Naive thymus-derived CD4-positive, alpha-beta T cell (primary cell): ENCODE measurements at regions of chr12 and their contacts with region 1.

Region 1: DNA sequence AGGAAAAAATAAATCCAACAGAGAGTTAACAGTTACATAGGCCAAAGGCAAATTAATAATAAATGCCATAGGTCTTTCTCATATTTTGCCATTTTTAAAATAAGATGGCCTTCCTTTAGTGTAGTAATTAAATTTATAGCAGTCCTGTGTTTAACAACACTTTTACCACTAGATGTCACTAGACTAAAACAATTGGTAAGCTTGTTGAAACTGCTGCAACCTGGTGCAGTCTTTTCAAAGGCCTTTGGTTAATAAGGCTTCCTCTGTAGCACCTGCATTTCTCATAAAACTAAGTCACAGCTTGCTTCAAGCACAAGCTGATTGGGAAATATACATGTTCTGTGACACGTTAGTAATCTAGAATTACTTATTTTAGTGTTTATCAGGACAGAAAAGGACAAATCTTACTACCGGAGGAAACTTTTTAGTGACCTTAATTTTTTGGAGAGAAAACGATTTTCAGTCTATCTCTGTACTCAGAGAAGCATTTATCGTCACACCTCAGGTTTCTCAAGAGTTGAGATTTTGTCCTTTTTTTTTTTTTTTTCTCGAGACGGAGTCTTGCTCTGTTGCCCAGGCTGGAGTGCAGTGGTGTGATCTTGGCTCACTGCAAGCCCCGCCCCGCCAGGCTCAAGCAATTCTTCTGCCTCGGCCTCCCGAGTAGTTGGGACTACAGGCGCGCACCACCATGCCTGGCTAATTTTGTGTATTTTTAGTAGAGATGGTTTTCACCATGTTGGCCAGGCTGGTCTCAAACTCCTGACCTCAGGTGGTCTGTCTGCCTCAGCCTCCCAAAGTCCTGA is 20.0 kb downstream of the BORCS5 start:
- DNase-seq: peak in 7 of 9 donors; percentile 58 to 84 (median 72)
- ATAC-seq: peak; percentile 63
- H3K4me3 ChIP-seq: no peak overlapping the region
- H3K4me3 Mint-ChIP-seq: no peak overlapping the region
- H3K27ac ChIP-seq: no peak overlapping the region
- H3K27ac Mint-ChIP-seq: peak overlapping the region in 6 of 9 donors; percentile 46 to 86 (median 66)
- H3K4me1 ChIP-seq: peaks cover 14 to 42% of the 10 kb centered on the region in 2 donors
- H3K4me1 Mint-ChIP-seq: peaks cover 7 to 50% (median 44%) of the 10 kb centered on the region in 7 donors
- H3K27me3 ChIP-seq: no peaks in the 10 kb centered on the region
- H3K27me3 Mint-ChIP-seq: no peaks in the 10 kb centered on the region

Region 2: GRCh38 chr12:12390390-12390789 is 13.5 kb after region 1 on chr12:
- CTCF ChIA-PET with region 1: interaction called, 4 read pairs
- POLR2A ChIA-PET with region 1: interaction called, 3 read pairs
- intact Hi-C with region 1: loop called in 1 of 2 experiments (anchors 1 kb)
- DNase-seq: no peak
- ATAC-seq: no peak
- H3K4me3 ChIP-seq: no peak overlapping the region
- H3K4me3 Mint-ChIP-seq: no peak overlapping the region
- H3K27ac ChIP-seq: no peak overlapping the region
- H3K27ac Mint-ChIP-seq: peak overlapping the region in 1 of 9 donors; percentile 21
- H3K4me1 ChIP-seq: peaks cover 0 to 11% of the 10 kb centered on the region in 2 donors
- H3K4me1 Mint-ChIP-seq: peaks cover 5 to 28% (median 19%) of the 10 kb centered on the region in 7 donors
- H3K27me3 ChIP-seq: no peaks in the 10 kb centered on the region
- H3K27me3 Mint-ChIP-seq: no peaks in the 10 kb centered on the region

Region 3: GRCh38 chr12:12505544-12506495 is 129.0 kb after region 1 on chr12:
- CTCF ChIA-PET with region 1: interaction called, 3 read pairs
- POLR2A ChIA-PET with region 1: no interaction called
- intact Hi-C with region 1: loop called (anchors 1 kb)
- DNase-seq: no peak
- ATAC-seq: no peak
- H3K4me3 ChIP-seq: no peak overlapping the region
- H3K4me3 Mint-ChIP-seq: peak overlapping the region in 5 of 10 donors; percentile 5 to 58 (median 38)
- H3K27ac ChIP-seq: no peak overlapping the region
- H3K27ac Mint-ChIP-seq: peak overlapping the region in 7 of 9 donors; percentile 6 to 83 (median 70)
- H3K4me1 ChIP-seq: peaks cover 3 to 5% of the 10 kb centered on the region in 2 donors
- H3K4me1 Mint-ChIP-seq: peaks cover 11 to 66% (median 38%) of the 10 kb centered on the region in 7 donors
- H3K27me3 ChIP-seq: no peaks in the 10 kb centered on the region
- H3K27me3 Mint-ChIP-seq: no peaks in the 10 kb centered on the region

Region 4: DNA sequence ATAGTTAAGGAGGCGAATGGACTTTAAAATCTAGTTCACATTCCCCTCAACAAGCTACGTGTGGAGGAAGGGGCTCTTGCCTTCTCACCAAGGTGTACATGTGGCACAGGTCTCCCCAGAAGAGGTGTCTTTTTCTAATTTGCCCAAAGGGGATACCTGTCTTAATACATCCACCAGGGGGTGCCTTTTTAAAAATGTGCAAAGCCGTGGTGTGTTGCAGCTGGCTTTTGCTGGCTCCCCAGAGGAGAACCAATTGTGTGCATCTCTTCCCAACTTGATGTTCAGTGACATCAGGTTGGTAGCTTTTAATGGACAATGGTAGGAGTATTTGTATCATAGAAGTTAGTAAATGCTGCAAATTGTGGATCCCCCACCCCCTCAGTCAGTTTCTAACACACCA is 268.6 kb after region 1 on chr12:
- CTCF ChIA-PET with region 1: interaction called, 7 read pairs
- POLR2A ChIA-PET with region 1: interaction called, 3 read pairs
- intact Hi-C with region 1: loop called in 1 of 2 experiments (anchors 1 kb)
- DNase-seq: peak in 8 of 9 donors; percentile 24 to 76 (median 62)
- ATAC-seq: peak; percentile 80
- H3K4me3 ChIP-seq: no peak overlapping the region
- H3K4me3 Mint-ChIP-seq: no peak overlapping the region
- H3K27ac ChIP-seq: no peak overlapping the region
- H3K27ac Mint-ChIP-seq: peak overlapping the region in 3 of 9 donors; percentile 42 to 79 (median 67)
- H3K4me1 ChIP-seq: no peaks in the 10 kb centered on the region
- H3K4me1 Mint-ChIP-seq: peaks cover 0 to 11% (median 3%) of the 10 kb centered on the region in 7 donors
- H3K27me3 ChIP-seq: no peaks in the 10 kb centered on the region
- H3K27me3 Mint-ChIP-seq: no peaks in the 10 kb centered on the region

Region 5: GRCh38 chr12:12704593-12705230 is 327.9 kb after region 1 on chr12:
- CTCF ChIA-PET with region 1: interaction called, 16 read pairs
- POLR2A ChIA-PET with region 1: interaction called, 7 read pairs
- intact Hi-C with region 1: loop called (anchors 1 kb)
- DNase-seq: peak in 7 of 9 donors; percentile 44 to 71 (median 60)
- ATAC-seq: peak; percentile 92
- H3K4me3 ChIP-seq: no peak overlapping the region
- H3K4me3 Mint-ChIP-seq: peak overlapping the region in 9 of 10 donors; percentile 16 to 76 (median 58)
- H3K27ac ChIP-seq: no peak overlapping the region
- H3K27ac Mint-ChIP-seq: peak overlapping the region; percentile 15 to 80 (median 64)
- H3K4me1 ChIP-seq: peaks cover 18 to 37% of the 10 kb centered on the region in 2 donors
- H3K4me1 Mint-ChIP-seq: peaks cover 17 to 35% (median 24%) of the 10 kb centered on the region in 7 donors
- H3K27me3 ChIP-seq: no peaks in the 10 kb centered on the region
- H3K27me3 Mint-ChIP-seq: no peaks in the 10 kb centered on the region

Region 6: DNA sequence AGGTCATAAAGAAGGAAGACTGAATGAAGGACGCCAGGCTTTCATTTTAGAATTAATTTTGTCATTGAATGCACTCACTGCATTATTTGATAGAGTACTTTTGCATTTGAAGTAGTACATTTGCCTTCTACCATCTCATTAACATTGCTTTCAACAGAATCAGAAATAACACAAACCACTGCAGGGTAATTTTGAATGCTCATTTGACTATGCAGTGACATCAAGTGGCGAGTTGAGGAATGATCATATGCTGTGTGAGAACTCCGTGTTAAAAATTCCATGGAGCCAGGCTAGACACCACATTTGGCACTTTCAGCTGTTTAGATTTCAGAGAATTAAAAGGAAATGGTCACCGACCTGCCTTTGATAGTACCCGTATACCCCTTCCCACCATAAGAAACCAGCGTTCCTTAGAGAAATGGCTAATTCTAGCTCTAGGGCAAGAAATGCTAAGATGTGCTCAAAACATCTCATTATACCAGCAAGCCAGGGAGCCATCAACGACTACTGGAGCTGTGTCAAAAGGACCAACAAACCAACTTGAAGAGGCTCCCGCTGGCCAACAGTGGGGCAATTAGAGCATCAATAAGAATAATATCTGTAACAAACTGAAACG is 606.7 kb after region 1 on chr12:
- CTCF ChIA-PET with region 1: no interaction called
- POLR2A ChIA-PET with region 1: no interaction called
- intact Hi-C with region 1: loop called in 1 of 2 experiments (anchors 1 kb)
- DNase-seq: peak in 5 of 9 donors; percentile 4 to 43 (median 19)
- ATAC-seq: peak; percentile 57
- H3K4me3 ChIP-seq: no peak overlapping the region
- H3K4me3 Mint-ChIP-seq: no peak overlapping the region
- H3K27ac ChIP-seq: no peak overlapping the region
- H3K27ac Mint-ChIP-seq: no peak overlapping the region
- H3K4me1 ChIP-seq: no peaks in the 10 kb centered on the region
- H3K4me1 Mint-ChIP-seq: no peaks in the 10 kb centered on the region
- H3K27me3 ChIP-seq: no peaks in the 10 kb centered on the region
- H3K27me3 Mint-ChIP-seq: no peaks in the 10 kb centered on the region